Activated naive CD4-positive, alpha-beta T cell treated with anti-CD3 and anti-CD28 coated beads for 36 hours (primary cell): ENCODE measurements at regions of chr18 and their contacts with region 1.

Region 1: DNA sequence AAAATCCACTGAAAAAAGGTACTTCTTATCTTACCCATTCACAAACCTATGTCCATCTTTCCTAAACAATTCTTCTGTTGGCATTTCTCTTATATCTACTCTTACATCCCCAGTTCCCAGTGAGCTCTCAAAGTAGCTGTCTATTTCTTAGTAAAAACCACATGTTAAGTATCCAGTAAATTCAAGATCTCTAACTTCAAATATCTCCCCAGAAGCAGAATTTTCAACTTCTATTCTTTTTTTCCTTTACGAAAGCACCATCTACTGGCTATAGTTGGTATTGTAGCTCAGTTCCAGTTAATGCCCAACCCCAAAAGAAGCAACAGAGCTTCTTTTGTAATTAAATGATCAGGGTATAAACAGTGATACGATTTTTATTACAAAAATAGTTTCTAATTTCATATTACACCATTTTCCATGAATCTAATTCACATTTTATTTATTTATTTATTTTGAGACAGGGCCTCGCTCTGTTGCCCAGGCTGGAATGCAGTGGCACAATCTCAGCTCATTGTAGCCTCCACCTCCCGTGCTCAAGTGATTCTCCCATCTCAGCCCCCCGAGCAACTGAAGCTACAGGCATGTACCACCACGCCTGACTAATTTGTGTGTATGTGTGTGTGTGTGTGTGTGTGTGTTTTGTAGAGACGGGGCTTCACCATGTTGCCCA is 28.5 kb downstream of the HRH4 start:
- DNase-seq: no peak
- H3K4me3 Mint-ChIP-seq: no peak overlapping the region
- H3K27ac Mint-ChIP-seq: no peak overlapping the region
- H3K4me1 Mint-ChIP-seq: peaks cover 3% of the 10 kb centered on the region
- H3K27me3 Mint-ChIP-seq: peaks cover 6% of the 10 kb centered on the region

Region 2: DNA sequence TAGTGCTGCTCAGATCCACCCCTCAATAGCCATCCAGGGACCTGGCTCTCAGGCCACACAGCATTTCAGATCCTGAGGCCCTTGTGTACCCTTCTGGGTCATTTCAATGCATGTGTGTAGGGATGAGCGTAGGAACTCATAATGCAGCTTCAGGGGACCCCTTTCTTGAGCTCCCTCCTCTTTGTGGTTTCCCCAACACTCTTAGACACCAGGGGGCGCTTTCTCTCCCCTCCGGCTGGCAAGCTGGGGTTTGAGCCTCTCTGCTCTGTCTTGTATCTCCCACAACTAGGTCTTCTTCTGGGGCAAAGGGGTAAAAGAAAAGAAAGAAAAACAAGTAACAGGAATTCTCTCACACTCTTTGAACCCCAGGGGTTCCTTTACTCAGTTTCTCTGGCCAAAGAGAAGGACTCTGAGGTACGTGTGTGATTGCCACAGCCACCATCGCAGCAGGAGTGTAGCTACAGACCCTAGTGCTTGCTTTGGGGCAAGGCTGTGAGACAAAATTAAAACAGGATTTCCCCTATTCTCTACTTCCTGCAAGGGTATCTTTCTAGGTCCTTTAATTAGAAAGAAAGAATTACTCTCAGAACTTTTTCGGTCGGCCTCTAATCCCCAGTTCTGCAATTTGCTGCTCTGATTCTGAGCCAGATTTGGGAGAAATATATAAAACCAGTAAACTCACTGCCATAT is 312.1 kb before region 1 on chr18:
- CTCF ChIA-PET with region 1: interaction called, 29 read pairs
- intact Hi-C with region 1: loop called (anchors 2 kb)
- DNase-seq: peak; percentile 66
- H3K4me3 Mint-ChIP-seq: no peak overlapping the region
- H3K27ac Mint-ChIP-seq: no peak overlapping the region
- H3K4me1 Mint-ChIP-seq: no peaks in the 10 kb centered on the region
- H3K27me3 Mint-ChIP-seq: no peaks in the 10 kb centered on the region

Region 3: DNA sequence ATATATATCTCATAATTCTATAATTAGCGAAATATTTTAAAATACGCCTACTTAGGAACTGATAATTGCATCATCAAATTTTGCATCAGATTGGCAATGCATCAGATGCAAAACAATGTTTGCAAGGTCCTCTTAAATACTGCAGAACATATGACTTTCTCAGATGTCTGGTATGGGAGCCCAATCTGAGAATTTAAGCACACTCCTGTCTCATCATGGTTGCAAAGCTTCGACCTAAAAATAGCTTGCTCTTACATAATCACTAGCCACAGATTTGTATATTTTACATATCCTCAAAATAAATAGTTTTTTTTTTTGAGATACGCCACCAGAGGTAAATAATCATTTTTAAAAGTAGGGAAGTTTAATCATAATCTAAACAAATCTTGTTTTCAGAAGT is 226.9 kb before region 1 on chr18:
- CTCF ChIA-PET with region 1: no interaction called
- intact Hi-C with region 1: no loop called
- DNase-seq: no peak
- H3K4me3 Mint-ChIP-seq: no peak overlapping the region
- H3K27ac Mint-ChIP-seq: no peak overlapping the region
- H3K4me1 Mint-ChIP-seq: no peaks in the 10 kb centered on the region
- H3K27me3 Mint-ChIP-seq: no peaks in the 10 kb centered on the region

Region 4: DNA sequence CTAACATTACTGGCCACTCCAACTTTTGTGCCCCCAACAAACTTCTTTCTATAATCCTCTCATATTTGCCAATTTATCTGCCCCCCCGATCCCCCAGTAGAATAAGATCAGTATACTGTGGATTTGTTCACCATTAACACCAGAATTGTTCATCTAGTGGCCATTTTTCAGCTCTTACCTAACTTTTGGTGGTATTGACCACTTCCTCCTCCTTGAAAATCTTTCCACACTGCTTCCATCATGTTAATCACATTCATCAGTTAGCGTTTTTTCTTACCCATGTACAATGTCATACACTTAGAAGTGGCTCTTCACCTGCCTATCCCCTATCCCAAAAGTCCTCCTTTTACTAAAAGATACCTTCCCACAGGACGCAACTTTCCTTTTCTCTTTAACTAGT is 56.3 kb before region 1 on chr18:
- CTCF ChIA-PET with region 1: interaction called, 5 read pairs
- intact Hi-C with region 1: loop called (anchors 2 kb)
- DNase-seq: no peak
- H3K4me3 Mint-ChIP-seq: no peak overlapping the region
- H3K27ac Mint-ChIP-seq: no peak overlapping the region
- H3K4me1 Mint-ChIP-seq: peaks cover 10% of the 10 kb centered on the region
- H3K27me3 Mint-ChIP-seq: no peaks in the 10 kb centered on the region

Region 5: GRCh38 chr18:24446953-24447538 is 41.9 kb before region 1 on chr18:
- CTCF ChIA-PET with region 1: interaction called, 12 read pairs
- intact Hi-C with region 1: no loop called
- DNase-seq: no peak
- H3K4me3 Mint-ChIP-seq: no peak overlapping the region
- H3K27ac Mint-ChIP-seq: no peak overlapping the region
- H3K4me1 Mint-ChIP-seq: peaks cover 4% of the 10 kb centered on the region
- H3K27me3 Mint-ChIP-seq: no peaks in the 10 kb centered on the region

Region 6: GRCh38 chr18:24514439-24514838 is 25.5 kb after region 1 on chr18:
- CTCF ChIA-PET with region 1: interaction called, 11 read pairs
- intact Hi-C with region 1: no loop called
- DNase-seq: peak; percentile 7
- H3K4me3 Mint-ChIP-seq: no peak overlapping the region
- H3K27ac Mint-ChIP-seq: no peak overlapping the region
- H3K4me1 Mint-ChIP-seq: no peaks in the 10 kb centered on the region
- H3K27me3 Mint-ChIP-seq: no peaks in the 10 kb centered on the region

Region 7: GRCh38 chr18:24726727-24727492 is 238.0 kb after region 1 on chr18:
- CTCF ChIA-PET with region 1: interaction called, 10 read pairs
- intact Hi-C with region 1: loop called (anchors 1 kb)
- DNase-seq: peak; percentile 73
- H3K4me3 Mint-ChIP-seq: no peak overlapping the region
- H3K27ac Mint-ChIP-seq: no peak overlapping the region
- H3K4me1 Mint-ChIP-seq: no peaks in the 10 kb centered on the region
- H3K27me3 Mint-ChIP-seq: peaks cover 14% of the 10 kb centered on the region

Region 8: DNA sequence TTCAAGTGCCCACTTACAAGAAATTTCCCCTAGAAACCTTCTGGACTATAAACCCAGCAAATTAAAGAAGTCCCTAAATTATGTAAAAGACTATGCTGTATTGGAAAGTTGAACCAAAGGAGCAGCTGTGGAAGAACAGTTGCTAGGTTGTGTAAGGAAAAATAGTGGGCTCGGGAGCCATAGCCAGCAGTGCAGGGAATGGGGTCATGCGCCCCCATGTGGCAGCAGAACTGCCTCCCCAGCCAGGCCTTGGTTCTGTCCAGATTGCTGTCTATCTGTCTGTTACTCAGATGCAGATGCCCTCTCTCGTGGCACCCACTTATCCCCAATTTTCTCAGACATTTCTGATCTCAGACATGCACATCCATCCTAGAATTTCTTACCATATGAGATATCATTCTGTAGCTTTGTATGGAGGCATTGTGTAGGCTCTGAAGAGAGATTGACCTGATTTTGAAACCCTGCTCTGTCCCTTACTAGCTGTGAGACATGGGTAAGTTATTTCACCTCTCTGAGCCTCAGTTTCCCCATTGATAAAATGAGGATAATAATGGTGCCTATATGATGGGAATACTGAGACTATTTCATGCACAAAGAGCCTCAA is 1343.1 kb after region 1 on chr18:
- CTCF ChIA-PET with region 1: no interaction called
- intact Hi-C with region 1: loop called (anchors 5 kb)
- DNase-seq: peak; percentile 46
- H3K4me3 Mint-ChIP-seq: no peak overlapping the region
- H3K27ac Mint-ChIP-seq: no peak overlapping the region
- H3K4me1 Mint-ChIP-seq: no peaks in the 10 kb centered on the region
- H3K27me3 Mint-ChIP-seq: no peaks in the 10 kb centered on the region